ENCODE measurements at regions of chr6 and their contacts with region 1.

Region 1: DNA sequence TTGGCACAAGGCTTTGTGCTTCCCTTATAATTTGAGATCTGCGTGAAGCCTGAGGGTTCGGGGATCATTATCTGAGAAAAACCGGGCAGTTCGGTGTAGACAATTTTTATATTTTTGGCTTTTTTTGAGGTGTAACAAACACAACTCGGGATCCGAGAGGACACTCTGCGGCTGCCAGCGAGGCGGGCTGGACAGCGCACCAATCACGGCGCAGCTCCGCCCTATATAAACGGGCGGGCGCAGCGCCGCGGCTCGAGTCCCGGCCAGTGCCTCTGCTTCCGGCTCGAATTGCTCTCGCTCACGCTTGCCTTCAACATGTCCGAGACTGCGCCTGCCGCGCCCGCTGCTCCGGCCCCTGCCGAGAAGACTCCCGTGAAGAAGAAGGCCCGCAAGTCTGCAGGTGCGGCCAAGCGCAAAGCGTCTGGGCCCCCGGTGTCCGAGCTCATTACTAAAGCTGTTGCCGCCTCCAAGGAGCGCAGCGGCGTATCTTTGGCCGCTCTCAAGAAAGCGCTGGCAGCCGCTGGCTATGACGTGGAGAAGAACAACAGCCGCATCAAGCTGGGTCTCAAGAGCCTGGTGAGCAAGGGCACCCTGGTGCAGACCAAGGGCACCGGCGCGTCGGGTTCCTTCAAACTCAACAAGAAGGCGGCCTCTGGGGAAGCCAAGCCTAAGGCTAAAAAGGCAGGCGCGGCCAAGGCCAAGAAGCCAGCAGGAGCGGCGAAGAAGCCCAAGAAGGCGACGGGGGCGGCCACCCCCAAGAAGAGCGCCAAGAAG is 69.0 kb downstream of the HFE start:
- DNase-seq: peak; percentile 96 to 97 (median 97)
- ATAC-seq: peak; percentile 78
- H3K4me3 ChIP-seq: peak overlapping the region; percentile 65
- H3K27ac ChIP-seq: peak overlapping the region; percentile 85
- H3K4me1 ChIP-seq: peaks cover 12 to 18% of the 10 kb centered on the region in 2 experiments; a peak in 4 of 5 replicates
- H3K27me3 ChIP-seq: no peaks in the 10 kb centered on the region
- CTCF ChIP-seq: no peak
- EP300 ChIP-seq: peak; percentile 29
- POLR2A ChIP-seq: peak; percentile 100
- RAD21 ChIP-seq: 0 out of 4 replicates have a peak, but pooled peaks of 1 of the 2 experiments have one; percentile 21

Region 2: GRCh38 chr6:26054857-26055669 is 101.2 kb before region 1 on chr6:
- CTCF ChIA-PET with region 1: interaction called, 3 read pairs
- POLR2A ChIA-PET with region 1: interaction called, 8 read pairs
- in situ Hi-C with region 1: no loop called
- intact Hi-C with region 1: loop called (anchors 1 kb)
- DNase-seq: peak; percentile 81 to 95 (median 88)
- ATAC-seq: peak; percentile 68
- H3K4me3 ChIP-seq: peak overlapping the region; percentile 60
- H3K27ac ChIP-seq: peak overlapping the region; percentile 94
- H3K4me1 ChIP-seq: peaks cover 7 to 29% of the 10 kb centered on the region in 2 experiments
- H3K27me3 ChIP-seq: no peaks in the 10 kb centered on the region
- CTCF ChIP-seq: peak; percentile 24 to 42 (median 29); a peak in 3 of 6 replicates
- EP300 ChIP-seq: peak; percentile 34
- POLR2A ChIP-seq: peak; percentile 95
- RAD21 ChIP-seq: peak in 1 of 2 experiments; percentile 59; a peak in 2 of 4 replicates

Region 3: DNA sequence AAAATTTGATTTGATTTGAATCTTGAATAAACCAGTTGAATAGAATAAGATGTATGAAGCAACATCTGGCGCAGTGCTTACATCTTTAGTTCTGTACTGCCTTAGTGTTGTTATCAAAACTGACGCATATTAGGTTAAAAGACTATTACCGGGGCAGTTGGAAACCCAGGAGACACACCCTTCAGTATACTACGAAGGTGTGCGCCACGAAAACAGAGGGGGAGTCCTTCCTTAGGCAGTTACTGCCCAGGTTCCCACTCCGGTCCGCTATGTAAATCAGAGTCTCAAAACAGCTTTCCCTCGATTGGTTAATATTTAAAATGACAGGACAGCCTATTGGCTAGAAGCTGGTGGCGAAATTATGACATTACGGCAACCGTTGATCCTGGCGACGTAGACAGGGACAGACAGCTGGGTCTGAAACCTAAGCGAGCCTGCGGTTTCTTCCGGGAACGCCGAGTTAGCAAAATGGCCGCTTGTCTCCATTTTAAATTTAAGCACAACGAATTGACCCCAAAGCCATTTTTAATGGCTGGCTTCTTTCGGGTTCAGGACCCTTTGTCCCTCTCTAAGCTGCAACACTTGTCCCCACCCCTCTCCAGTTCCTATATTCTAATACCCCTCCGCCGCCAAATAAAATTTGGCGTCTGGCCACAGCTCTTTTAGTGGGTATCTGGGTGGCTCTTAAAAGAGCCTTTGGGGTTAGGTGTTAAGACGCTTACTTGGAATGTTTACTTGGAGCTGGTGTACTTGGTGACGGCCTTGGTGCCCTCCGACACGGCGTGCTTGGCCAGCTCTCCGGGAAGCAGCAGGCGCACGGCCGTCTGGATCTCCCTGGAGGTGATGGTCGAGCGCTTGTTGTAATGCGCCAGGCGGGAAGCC is 33.2 kb before region 1 on chr6:
- CTCF ChIA-PET with region 1: no interaction called
- POLR2A ChIA-PET with region 1: interaction called, 465 read pairs
- in situ Hi-C with region 1: no loop called
- intact Hi-C with region 1: loop called (anchors 1 kb)
- DNase-seq: peak; percentile 79 to 99 (median 86)
- ATAC-seq: peak; percentile 62
- H3K4me3 ChIP-seq: peak overlapping the region; percentile 72
- H3K27ac ChIP-seq: peak overlapping the region; percentile 95
- H3K4me1 ChIP-seq: peaks cover 3 to 7% of the 10 kb centered on the region in 2 experiments; a peak in 4 of 5 replicates
- H3K27me3 ChIP-seq: no peaks in the 10 kb centered on the region
- CTCF ChIP-seq: peak in 1 of 3 experiments; percentile 23; a peak in 1 of 6 replicates
- EP300 ChIP-seq: peak; percentile 99
- POLR2A ChIP-seq: no peak; the same call in none of the 2 replicates
- RAD21 ChIP-seq: 0 out of 4 replicates have a peak, but pooled peaks of 1 of the 2 experiments have one; percentile 6

Region 4: DNA sequence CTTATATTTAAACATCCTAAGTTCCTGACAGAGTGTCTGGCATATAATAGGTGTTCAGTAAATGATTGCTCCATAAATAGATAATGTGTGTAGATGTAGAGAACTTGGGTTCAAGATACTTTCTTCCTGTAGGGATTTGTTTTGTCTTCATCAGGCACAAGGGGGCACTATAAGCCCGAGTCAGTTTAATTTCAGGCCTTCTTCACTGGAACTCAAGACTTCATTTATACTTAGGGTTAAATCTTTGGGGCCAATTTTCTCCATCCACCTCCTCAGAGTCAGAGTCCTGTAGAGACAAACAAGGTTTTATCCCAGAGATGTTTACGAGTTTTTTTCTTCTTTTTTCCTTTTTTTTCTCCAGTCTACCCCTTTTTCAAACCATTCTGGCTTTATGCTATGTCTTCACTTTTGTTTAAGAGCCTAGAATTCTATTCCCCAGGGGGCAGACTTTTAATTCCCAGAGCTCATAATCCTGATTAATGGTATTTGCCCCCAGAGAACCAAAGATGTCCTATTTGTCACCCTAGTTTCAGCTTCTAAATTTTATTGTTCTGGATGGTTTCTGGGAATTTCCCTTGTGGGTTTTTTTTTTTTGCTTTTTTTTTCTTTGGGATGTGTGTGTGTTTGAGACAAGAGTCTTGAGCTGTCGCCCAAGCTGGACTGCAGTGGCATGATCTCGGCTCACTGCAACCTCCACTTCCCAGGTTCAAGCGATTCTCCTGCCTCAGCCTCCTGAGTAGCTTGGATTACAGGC is 19.3 kb after region 1 on chr6:
- CTCF ChIA-PET with region 1: no interaction called
- POLR2A ChIA-PET with region 1: interaction called, 157 read pairs
- in situ Hi-C with region 1: no loop called
- intact Hi-C with region 1: no loop called
- DNase-seq: peak; percentile 60 to 88 (median 71)
- ATAC-seq: peak; percentile 41
- H3K4me3 ChIP-seq: no peak overlapping the region
- H3K27ac ChIP-seq: no peak overlapping the region
- H3K4me1 ChIP-seq: peaks cover 14% of the 10 kb centered on the region in 2 experiments
- H3K27me3 ChIP-seq: no peaks in the 10 kb centered on the region
- CTCF ChIP-seq: peak; percentile 59 to 87 (median 77)
- EP300 ChIP-seq: no peak; the same call in 1 of the 2 replicates
- POLR2A ChIP-seq: no peak
- RAD21 ChIP-seq: peak; percentile 87 to 88

Region 5: GRCh38 chr6:26258200-26258977 is 102.1 kb after region 1 on chr6:
- CTCF ChIA-PET with region 1: no interaction called
- POLR2A ChIA-PET with region 1: no interaction called
- in situ Hi-C with region 1: no loop called
- intact Hi-C with region 1: no loop called
- DNase-seq: peak in 3 of 4 experiments; percentile 48 to 51 (median 49)
- ATAC-seq: peak; percentile 77
- H3K4me3 ChIP-seq: no peak overlapping the region
- H3K27ac ChIP-seq: no peak overlapping the region
- H3K4me1 ChIP-seq: peaks cover 3 to 11% of the 10 kb centered on the region in 2 experiments; a peak in 3 of 5 replicates
- H3K27me3 ChIP-seq: no peaks in the 10 kb centered on the region
- CTCF ChIP-seq: peak; percentile 41 to 66 (median 56); a peak in 5 of 6 replicates
- EP300 ChIP-seq: no peak
- POLR2A ChIP-seq: no peak
- RAD21 ChIP-seq: peak; percentile 18 to 57; a peak in 2 of 4 replicates

Region 6: GRCh38 chr6:26285143-26286134 is 129.2 kb after region 1 on chr6:
- CTCF ChIA-PET with region 1: no interaction called
- POLR2A ChIA-PET with region 1: interaction called, 16 read pairs
- in situ Hi-C with region 1: no loop called
- intact Hi-C with region 1: no loop called
- DNase-seq: peak; percentile 89 to 100 (median 92)
- ATAC-seq: peak; percentile 84
- H3K4me3 ChIP-seq: peak overlapping the region; percentile 50
- H3K27ac ChIP-seq: peak overlapping the region; percentile 97
- H3K4me1 ChIP-seq: peaks cover 11 to 19% of the 10 kb centered on the region in 2 experiments; a peak in 4 of 5 replicates
- H3K27me3 ChIP-seq: no peaks in the 10 kb centered on the region
- CTCF ChIP-seq: peak in 1 of 3 experiments; percentile 5; a peak in 2 of 6 replicates
- EP300 ChIP-seq: peak; percentile 96
- POLR2A ChIP-seq: peak; percentile 99
- RAD21 ChIP-seq: peak in 1 of 2 experiments; percentile 41; a peak in 3 of 4 replicates

Region 7: GRCh38 chr6:26366504-26366903 is 210.2 kb after region 1 on chr6:
- CTCF ChIA-PET with region 1: no interaction called
- POLR2A ChIA-PET with region 1: no interaction called
- in situ Hi-C with region 1: no loop called
- intact Hi-C with region 1: no loop called
- DNase-seq: peak in 2 of 4 experiments; percentile 37
- ATAC-seq: 0 out of 3 replicates have a peak, but pooled peaks have one; percentile 7
- H3K4me3 ChIP-seq: no peak overlapping the region
- H3K27ac ChIP-seq: no peak overlapping the region
- H3K4me1 ChIP-seq: peaks cover 7 to 22% of the 10 kb centered on the region in 2 experiments
- H3K27me3 ChIP-seq: no peaks in the 10 kb centered on the region
- CTCF ChIP-seq: no peak
- EP300 ChIP-seq: no peak
- POLR2A ChIP-seq: no peak
- RAD21 ChIP-seq: 0 out of 4 replicates have a peak, but pooled peaks of 1 of the 2 experiments have one; percentile 7

Region 8: GRCh38 chr6:27132532-27133280 is 976.4 kb after region 1 on chr6:
- CTCF ChIA-PET with region 1: no interaction called
- POLR2A ChIA-PET with region 1: interaction called, 37 read pairs
- in situ Hi-C with region 1: no loop called
- intact Hi-C with region 1: loop called (anchors 2 kb)
- DNase-seq: peak; percentile 93 to 100 (median 97)
- ATAC-seq: peak; percentile 68
- H3K4me3 ChIP-seq: peak overlapping the region; percentile 72
- H3K27ac ChIP-seq: peak overlapping the region; percentile 98
- H3K4me1 ChIP-seq: peaks cover 6 to 7% of the 10 kb centered on the region in 2 experiments
- H3K27me3 ChIP-seq: no peaks in the 10 kb centered on the region
- CTCF ChIP-seq: peak in 1 of 3 experiments; percentile 7; a peak in 1 of 6 replicates
- EP300 ChIP-seq: peak; percentile 26; the same call in 1 of the 2 replicates
- POLR2A ChIP-seq: peak; percentile 100
- RAD21 ChIP-seq: peak in 1 of 2 experiments; percentile 36; a peak in 2 of 4 replicates

Measured in K562 (cell line).